ENCODE measurements at regions of chr3 and their contacts with region 1.

Region 1: DNA sequence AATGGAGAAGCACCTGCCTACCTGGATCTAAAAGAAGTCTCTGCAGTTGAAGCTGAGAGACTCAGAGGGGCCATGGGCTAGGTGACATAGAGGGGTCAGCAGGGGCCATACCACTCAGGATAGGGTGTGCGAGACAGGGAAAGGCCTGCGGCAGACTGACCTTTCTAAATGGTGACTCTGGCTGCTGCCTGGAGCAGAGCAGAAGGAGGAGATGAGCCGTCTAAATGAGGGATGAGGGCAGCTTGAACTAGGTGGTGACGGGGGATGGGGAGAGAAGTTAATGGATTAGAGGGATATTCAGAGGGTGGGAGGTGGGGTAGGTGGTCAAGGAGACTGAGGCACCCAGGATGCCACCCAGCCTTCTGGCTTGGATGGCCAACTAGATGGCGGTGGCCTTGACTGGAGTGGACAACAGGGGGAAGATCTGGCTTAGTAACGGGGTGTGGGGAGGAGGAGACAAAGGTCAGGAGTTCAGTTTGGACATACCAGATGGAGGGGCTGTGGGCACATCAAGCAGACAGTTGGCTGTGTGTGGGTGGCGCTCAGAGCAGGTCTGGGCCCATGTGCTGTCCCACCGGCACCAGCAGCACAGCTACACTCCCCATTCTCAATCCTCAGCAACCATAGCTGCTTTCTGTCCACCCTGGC is 3.2 kb upstream of the ITIH1 start:
- DNase-seq: no peak
- ATAC-seq: no peak
- H3K4me3 ChIP-seq: no peak overlapping the region
- H3K27ac ChIP-seq: no peak overlapping the region
- H3K4me1 ChIP-seq: peaks cover 12% of the 10 kb centered on the region
- H3K27me3 ChIP-seq: no peaks in the 10 kb centered on the region
- CTCF ChIP-seq: no peak

Region 2: GRCh38 chr3:52786330-52787215 is 12.4 kb after region 1 on chr3:
- CTCF ChIA-PET with region 1: no interaction called
- POLR2A ChIA-PET with region 1: interaction called, 14 read pairs
- in situ Hi-C with region 1: no loop called
- intact Hi-C with region 1: no loop called
- DNase-seq: no peak
- ATAC-seq: no peak
- H3K4me3 ChIP-seq: no peak overlapping the region
- H3K27ac ChIP-seq: no peak overlapping the region
- H3K4me1 ChIP-seq: no peaks in the 10 kb centered on the region
- H3K27me3 ChIP-seq: no peaks in the 10 kb centered on the region; the same call in 1 of the 2 replicates
- CTCF ChIP-seq: no peak

Measured in Panc1 (cell line).